ENCODE measurements at regions of chr1 and their contacts with region 1.

Region 1: DNA sequence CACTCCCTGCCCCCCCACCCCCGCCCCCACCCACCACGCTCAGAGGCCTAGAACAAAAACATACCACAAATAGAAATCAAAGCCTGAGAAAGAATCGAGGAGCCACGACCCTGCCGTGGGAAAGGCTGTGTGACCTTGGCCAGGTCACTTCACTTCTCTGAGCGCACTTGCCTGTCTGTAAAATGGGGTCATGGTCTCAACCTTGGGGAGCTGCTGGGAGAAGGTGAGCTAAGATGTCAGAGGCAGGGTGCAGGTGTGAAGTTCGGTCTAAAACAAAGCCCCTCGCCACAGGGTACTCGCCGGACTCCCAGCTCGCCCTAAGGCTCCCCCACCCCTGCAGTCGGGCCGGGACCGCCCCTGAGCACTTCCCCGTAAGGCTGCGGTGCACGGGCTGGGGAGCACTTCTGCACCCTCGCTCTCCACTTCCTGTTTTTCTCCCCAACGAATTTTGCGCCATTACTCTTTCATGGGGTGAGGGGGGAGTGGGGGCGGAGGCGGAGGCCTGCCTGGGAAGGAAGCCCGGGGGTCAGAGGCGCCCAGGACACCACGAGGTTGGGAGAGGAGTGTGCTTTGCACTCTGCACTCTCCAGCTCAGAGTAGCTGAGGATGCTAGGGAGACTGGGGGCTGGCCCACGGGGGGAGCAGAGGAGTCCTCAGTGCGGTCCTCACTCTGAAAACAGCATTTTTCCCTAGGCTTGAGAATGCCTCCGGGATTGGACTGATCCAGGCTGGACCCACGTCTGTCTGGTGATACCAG is 21.9 kb upstream of the PIK3CD start:
- DNase-seq: peak; percentile 53 to 62
- ATAC-seq: peak; percentile 29 to 72 (median 54)
- H3K4me3 ChIP-seq: peak overlapping the region in 2 of 10 donors; percentile 11 to 47
- H3K27ac ChIP-seq: peak overlapping the region in 1 of 10 donors; percentile 89
- H3K4me1 ChIP-seq: peaks cover 0 to 64% (median 4%) of the 10 kb centered on the region in 9 donors
- H3K27me3 ChIP-seq: peaks cover 0 to 18% (median 17%) of the 10 kb centered on the region in 7 donors
- CTCF ChIP-seq: no peak

Region 2: GRCh38 chr1:9717193-9718005 is 87.8 kb after region 1 on chr1:
- intact Hi-C with region 1: loop called in 3 of 10 experiments (anchors 5 to 10 kb)
- DNase-seq: peak; percentile 32 to 46
- ATAC-seq: peak in 7 of 8 donors; percentile 6 to 77 (median 52)
- H3K4me3 ChIP-seq: peak overlapping the region in 6 of 10 donors; percentile 15 to 46 (median 30)
- H3K27ac ChIP-seq: peak overlapping the region in 3 of 10 donors; percentile 17 to 88 (median 53)
- H3K4me1 ChIP-seq: peaks cover 0 to 33% (median 0%) of the 10 kb centered on the region in 9 donors
- H3K27me3 ChIP-seq: no peaks in the 10 kb centered on the region
- CTCF ChIP-seq: no peak

Region 3: DNA sequence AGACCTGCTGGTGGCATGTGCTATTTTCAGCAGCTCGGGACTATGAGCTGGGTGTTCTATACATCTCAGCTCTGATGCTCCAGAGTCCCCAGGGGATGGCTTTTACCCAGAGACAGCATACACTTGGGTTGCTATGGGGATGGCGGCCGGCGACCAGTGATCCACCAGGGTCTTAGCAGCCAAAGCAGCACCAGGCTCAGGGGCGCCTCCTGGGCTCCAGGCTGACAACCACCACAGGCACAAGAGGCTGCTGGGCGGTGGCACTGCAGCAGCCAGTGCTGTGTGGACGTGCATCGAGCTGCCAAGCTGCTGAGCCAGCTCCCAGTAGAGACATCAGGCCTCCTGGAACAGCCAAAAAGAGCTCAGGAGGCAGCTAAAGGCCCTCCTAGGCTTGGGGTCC is 231.7 kb after region 1 on chr1:
- intact Hi-C with region 1: loop called in 5 of 10 experiments (anchors 2 to 5 kb)
- DNase-seq: no peak
- ATAC-seq: no peak
- H3K4me3 ChIP-seq: no peak overlapping the region
- H3K27ac ChIP-seq: no peak overlapping the region
- H3K4me1 ChIP-seq: peaks cover 0 to 28% (median 15%) of the 10 kb centered on the region in 9 donors
- H3K27me3 ChIP-seq: no peaks in the 10 kb centered on the region
- CTCF ChIP-seq: no peak

Region 4: GRCh38 chr1:9874959-9875635 is 245.5 kb after region 1 on chr1:
- intact Hi-C with region 1: loop called in 1 of 10 experiments (anchors 10 kb)
- DNase-seq: peak; percentile 66 to 76
- ATAC-seq: peak; percentile 77 to 92 (median 88)
- H3K4me3 ChIP-seq: peak overlapping the region in 4 of 10 donors; percentile 16 to 26 (median 24)
- H3K27ac ChIP-seq: peak overlapping the region in 9 of 10 donors; percentile 14 to 73 (median 46)
- H3K4me1 ChIP-seq: peaks cover 7 to 49% (median 36%) of the 10 kb centered on the region in 9 donors
- H3K27me3 ChIP-seq: no peaks in the 10 kb centered on the region
- CTCF ChIP-seq: peak; percentile 91 to 95 (median 93)